Esophagus squamous epithelium (tissue), 5 donors: ENCODE measurements at regions of chr9 and their contacts with region 1.

Region 1: DNA sequence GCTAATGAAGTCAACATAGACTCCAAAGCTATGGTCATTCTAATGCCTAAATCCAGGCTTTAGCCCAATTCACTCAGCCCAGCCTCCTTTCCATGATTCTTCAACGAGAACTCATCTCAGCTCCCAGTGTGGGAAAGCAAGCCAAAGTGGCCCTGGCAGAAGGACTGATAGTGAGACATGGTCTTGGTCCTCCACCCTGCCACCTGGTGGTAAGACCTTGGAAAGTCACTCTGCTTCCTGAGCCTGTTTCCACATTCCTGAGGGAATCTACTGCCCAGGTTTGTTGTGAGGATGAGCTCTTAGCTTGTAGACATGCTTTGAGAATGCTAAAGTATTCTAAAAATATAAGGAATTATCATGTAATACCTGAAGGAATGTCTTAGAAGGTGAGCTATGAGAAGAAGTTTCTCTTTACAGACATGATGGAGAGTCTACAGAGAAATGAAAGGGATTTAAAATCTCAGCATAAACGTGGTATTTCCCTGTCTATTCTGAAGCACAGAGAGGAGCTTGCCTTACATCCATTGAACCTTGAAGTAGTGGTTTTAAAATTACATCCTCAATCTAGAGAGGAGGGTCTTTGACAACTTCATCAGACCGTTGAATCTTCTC is 173.5 kb downstream of the TRIM32 start:
- DNase-seq: no peak
- H3K4me3 ChIP-seq: no peak overlapping the region
- H3K27ac ChIP-seq: no peak overlapping the region
- H3K4me1 ChIP-seq: peaks cover 0 to 38% (median 9%) of the 10 kb centered on the region in 3 donors
- H3K27me3 ChIP-seq: no peaks in the 10 kb centered on the region
- CTCF ChIP-seq: peak; percentile 43 to 87 (median 69)
- POLR2A ChIP-seq: no peak

Region 2: DNA sequence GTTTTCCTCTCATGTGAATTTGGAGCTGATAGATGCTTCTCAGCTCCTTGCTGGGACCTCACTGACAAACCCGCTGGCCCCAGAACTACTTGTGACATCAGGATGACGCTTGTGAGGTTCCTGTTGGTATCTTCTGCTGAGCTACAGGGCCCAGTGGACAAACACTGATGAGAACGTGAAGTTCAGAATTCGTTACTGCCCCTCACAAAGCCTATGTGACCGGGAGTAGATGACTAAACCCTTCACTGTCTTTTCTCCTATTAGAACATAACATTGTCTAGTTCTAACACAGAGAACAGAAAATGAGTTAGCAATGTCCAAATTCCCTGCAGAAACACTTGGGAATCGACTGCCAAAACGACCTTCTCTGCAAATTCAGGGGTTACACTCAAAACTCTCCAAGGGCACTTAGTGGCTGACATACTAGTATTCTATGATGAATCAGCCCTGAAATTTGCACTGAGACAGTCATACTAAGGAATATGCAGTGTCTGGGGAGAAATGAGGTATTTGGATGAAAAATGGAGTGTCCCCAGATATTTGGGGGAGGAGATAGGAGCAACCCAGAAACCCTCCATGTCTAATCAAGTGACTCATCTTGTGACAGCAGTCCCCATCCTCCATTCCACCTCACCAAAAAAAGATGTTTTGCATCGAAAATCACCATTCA is 316.7 kb before region 1 on chr9:
- intact Hi-C with region 1: no loop called
- DNase-seq: no peak
- H3K4me3 ChIP-seq: no peak overlapping the region
- H3K27ac ChIP-seq: peak overlapping the region in 1 of 4 donors; percentile 16
- H3K4me1 ChIP-seq: peaks cover 10 to 19% (median 17%) of the 10 kb centered on the region in 3 donors
- H3K27me3 ChIP-seq: no peaks in the 10 kb centered on the region
- CTCF ChIP-seq: no peak
- POLR2A ChIP-seq: no peak

Region 3: GRCh38 chr9:116741086-116741740 is 119.4 kb before region 1 on chr9:
- intact Hi-C with region 1: loop called (anchors 5 kb)
- DNase-seq: no peak
- H3K4me3 ChIP-seq: no peak overlapping the region
- H3K27ac ChIP-seq: no peak overlapping the region
- H3K4me1 ChIP-seq: peaks cover 0 to 8% (median 4%) of the 10 kb centered on the region in 3 donors
- H3K27me3 ChIP-seq: no peaks in the 10 kb centered on the region
- CTCF ChIP-seq: no peak
- POLR2A ChIP-seq: no peak

Region 4: DNA sequence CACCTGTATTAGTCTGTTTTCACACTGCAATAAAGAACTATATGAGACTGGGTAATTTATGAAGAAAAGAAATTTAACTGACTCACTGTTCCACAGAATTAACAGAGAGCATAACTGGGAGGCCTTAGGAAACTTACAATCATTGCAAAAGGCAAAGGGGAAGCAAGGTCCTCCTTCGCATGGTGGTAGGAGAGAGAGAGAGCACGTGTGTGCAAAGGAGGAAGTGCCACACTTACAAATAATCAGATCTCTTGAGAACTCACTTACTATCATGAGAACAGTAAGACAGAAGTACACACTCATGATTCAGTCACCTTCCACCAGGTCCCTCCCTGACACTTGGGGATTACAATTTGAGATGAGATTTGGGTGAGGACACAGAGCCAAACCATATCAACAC is 85.2 kb after region 1 on chr9:
- intact Hi-C with region 1: no loop called
- DNase-seq: no peak
- H3K4me3 ChIP-seq: no peak overlapping the region
- H3K27ac ChIP-seq: no peak overlapping the region
- H3K4me1 ChIP-seq: no peaks in the 10 kb centered on the region
- H3K27me3 ChIP-seq: no peaks in the 10 kb centered on the region
- CTCF ChIP-seq: no peak
- POLR2A ChIP-seq: no peak